CD4-positive, alpha-beta memory T cell (primary cell): ENCODE measurements at regions of chr7 and their contacts with region 1.

Region 1: GRCh38 chr7:5704534-5704922 is 76.9 kb downstream of the RNF216 start:
- DNase-seq: peak; percentile 74 to 79 (median 77)
- H3K4me3 ChIP-seq: no peak overlapping the region
- H3K4me3 Mint-ChIP-seq: no peak overlapping the region
- H3K27ac ChIP-seq: no peak overlapping the region
- H3K27ac Mint-ChIP-seq: peak overlapping the region in 3 of 7 donors; percentile 19 to 68 (median 32)
- H3K4me1 ChIP-seq: peaks cover 33% of the 10 kb centered on the region
- H3K4me1 Mint-ChIP-seq: peaks cover 27 to 37% (median 32%) of the 10 kb centered on the region in 4 donors
- H3K27me3 ChIP-seq: no peaks in the 10 kb centered on the region
- H3K27me3 Mint-ChIP-seq: no peaks in the 10 kb centered on the region

Region 2: DNA sequence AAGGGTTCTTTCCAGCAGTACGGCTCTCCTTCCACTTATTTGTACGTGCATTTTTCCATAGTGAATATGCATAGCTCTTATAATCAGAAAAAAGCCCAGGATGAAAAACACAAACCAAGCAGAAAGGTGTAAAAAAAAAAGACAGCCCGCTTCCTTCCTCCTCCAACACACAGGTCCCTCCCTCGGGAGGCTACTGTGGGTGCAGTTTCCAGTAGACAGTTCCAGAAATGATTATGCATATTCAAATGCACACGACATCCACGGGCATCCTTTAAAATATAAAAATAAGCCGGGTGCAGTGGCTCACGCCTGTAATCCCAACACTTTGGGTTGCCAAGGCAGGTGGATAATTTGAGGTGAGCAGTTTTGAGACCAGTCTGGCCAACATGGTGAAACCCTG is 340.8 kb before region 1 on chr7:
- CTCF ChIA-PET with region 1: interaction called, 8 read pairs
- POLR2A ChIA-PET with region 1: no interaction called
- intact Hi-C with region 1: loop called (anchors 5 kb)
- DNase-seq: no peak
- H3K4me3 ChIP-seq: no peak overlapping the region
- H3K4me3 Mint-ChIP-seq: peak overlapping the region in 4 of 8 donors; percentile 16 to 40 (median 30)
- H3K27ac ChIP-seq: no peak overlapping the region
- H3K27ac Mint-ChIP-seq: peak overlapping the region in 5 of 7 donors; percentile 9 to 44 (median 12)
- H3K4me1 ChIP-seq: peaks cover 7% of the 10 kb centered on the region
- H3K4me1 Mint-ChIP-seq: peaks cover 11 to 26% (median 20%) of the 10 kb centered on the region in 4 donors
- H3K27me3 ChIP-seq: no peaks in the 10 kb centered on the region
- H3K27me3 Mint-ChIP-seq: no peaks in the 10 kb centered on the region

Region 3: GRCh38 chr7:5526100-5526905 is 178.2 kb before region 1 on chr7:
- CTCF ChIA-PET with region 1: no interaction called
- POLR2A ChIA-PET with region 1: no interaction called
- intact Hi-C with region 1: loop called (anchors 1 kb)
- DNase-seq: peak in 3 of 5 donors; percentile 33 to 44 (median 43)
- H3K4me3 ChIP-seq: no peak overlapping the region
- H3K4me3 Mint-ChIP-seq: peak overlapping the region; percentile 91 to 99 (median 98)
- H3K27ac ChIP-seq: peak overlapping the region; percentile 69
- H3K27ac Mint-ChIP-seq: peak overlapping the region; percentile 93 to 99 (median 98)
- H3K4me1 ChIP-seq: peaks cover 23% of the 10 kb centered on the region
- H3K4me1 Mint-ChIP-seq: peaks cover 19 to 54% (median 35%) of the 10 kb centered on the region in 4 donors
- H3K27me3 ChIP-seq: no peaks in the 10 kb centered on the region
- H3K27me3 Mint-ChIP-seq: no peaks in the 10 kb centered on the region

Region 4: DNA sequence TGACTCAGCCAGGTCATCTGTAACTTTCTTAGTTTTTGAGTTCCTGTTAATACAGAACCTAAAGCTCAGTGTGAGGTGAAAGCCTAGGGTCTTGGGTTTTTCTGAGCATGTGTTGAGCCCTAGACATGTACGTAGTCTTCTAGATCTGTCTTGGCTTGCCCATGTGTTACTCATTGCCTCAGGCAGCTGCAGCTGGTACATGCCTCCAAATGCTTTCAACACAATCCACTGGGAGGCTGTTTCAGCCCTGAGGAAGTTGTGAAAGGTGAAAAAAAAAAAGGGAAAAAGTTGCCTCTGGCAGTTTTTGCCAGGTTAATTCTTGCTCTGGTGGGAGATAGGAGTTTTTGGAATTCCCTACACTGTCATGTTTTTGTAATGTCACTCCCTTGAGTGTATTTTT is 57.7 kb before region 1 on chr7:
- CTCF ChIA-PET with region 1: interaction called, 4 read pairs
- POLR2A ChIA-PET with region 1: no interaction called
- intact Hi-C with region 1: loop called (anchors 10 kb)
- DNase-seq: no peak
- H3K4me3 ChIP-seq: no peak overlapping the region
- H3K4me3 Mint-ChIP-seq: no peak overlapping the region
- H3K27ac ChIP-seq: no peak overlapping the region
- H3K27ac Mint-ChIP-seq: peak overlapping the region in 2 of 7 donors; percentile 9 to 42
- H3K4me1 ChIP-seq: peaks cover 31% of the 10 kb centered on the region
- H3K4me1 Mint-ChIP-seq: peaks cover 25 to 36% (median 31%) of the 10 kb centered on the region in 4 donors
- H3K27me3 ChIP-seq: no peaks in the 10 kb centered on the region
- H3K27me3 Mint-ChIP-seq: no peaks in the 10 kb centered on the region

Region 5: DNA sequence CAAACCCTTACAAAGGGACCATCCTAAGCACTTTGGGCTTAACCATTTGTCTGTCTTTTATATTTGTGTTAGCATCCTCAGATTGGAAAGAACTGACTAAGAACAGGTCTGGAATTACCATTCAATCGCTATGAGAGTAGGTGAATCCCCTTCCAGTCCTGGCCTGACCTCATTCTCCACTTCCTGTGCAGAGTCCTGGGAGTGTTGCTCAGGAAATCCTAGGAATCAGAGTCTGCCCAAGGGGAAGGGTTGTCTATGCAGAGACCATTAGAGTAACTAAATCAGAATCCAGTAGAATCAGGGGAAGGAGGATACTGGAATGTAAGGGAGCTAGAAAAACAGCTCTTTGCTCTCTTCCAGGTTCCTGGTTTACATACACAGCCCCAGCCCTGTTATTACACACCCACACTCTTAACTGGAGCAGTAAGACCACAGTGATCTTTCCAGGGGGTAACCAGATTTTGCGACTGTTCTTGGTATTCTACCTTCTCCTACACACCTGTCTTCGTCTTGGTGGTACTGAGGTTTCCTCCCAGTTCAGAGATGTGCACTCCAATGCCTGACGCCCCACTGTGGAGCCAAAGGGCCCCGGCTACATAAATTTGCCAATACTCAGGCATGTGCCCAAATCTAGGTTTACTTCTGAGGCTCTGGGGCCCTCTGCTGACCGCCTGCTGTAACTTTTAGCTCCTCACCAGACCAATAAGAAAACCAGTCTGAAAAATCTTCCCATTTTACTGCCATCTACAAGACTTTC is 26.8 kb before region 1 on chr7:
- CTCF ChIA-PET with region 1: interaction called, 23 read pairs
- POLR2A ChIA-PET with region 1: interaction called, 5 read pairs
- intact Hi-C with region 1: loop called (anchors 2 kb)
- DNase-seq: peak in 1 of 5 donors; percentile 43
- H3K4me3 ChIP-seq: no peak overlapping the region
- H3K4me3 Mint-ChIP-seq: peak overlapping the region in 1 of 8 donors; percentile 15
- H3K27ac ChIP-seq: no peak overlapping the region
- H3K27ac Mint-ChIP-seq: peak overlapping the region in 6 of 7 donors; percentile 25 to 77 (median 58)
- H3K4me1 ChIP-seq: peaks cover 42% of the 10 kb centered on the region
- H3K4me1 Mint-ChIP-seq: peaks cover 19 to 65% (median 45%) of the 10 kb centered on the region in 4 donors
- H3K27me3 ChIP-seq: no peaks in the 10 kb centered on the region
- H3K27me3 Mint-ChIP-seq: no peaks in the 10 kb centered on the region

Region 6: GRCh38 chr7:5822742-5823503 is 118.4 kb after region 1 on chr7:
- CTCF ChIA-PET with region 1: interaction called, 4 read pairs
- POLR2A ChIA-PET with region 1: no interaction called
- intact Hi-C with region 1: loop called (anchors 5 kb)
- DNase-seq: peak; percentile 98 to 100 (median 99)
- H3K4me3 ChIP-seq: peak overlapping the region; percentile 79 to 88
- H3K4me3 Mint-ChIP-seq: peak overlapping the region; percentile 84 to 95 (median 91)
- H3K27ac ChIP-seq: peak overlapping the region; percentile 79
- H3K27ac Mint-ChIP-seq: peak overlapping the region; percentile 81 to 98 (median 93)
- H3K4me1 ChIP-seq: peaks cover 33% of the 10 kb centered on the region
- H3K4me1 Mint-ChIP-seq: peaks cover 13 to 42% (median 27%) of the 10 kb centered on the region in 4 donors
- H3K27me3 ChIP-seq: no peaks in the 10 kb centered on the region
- H3K27me3 Mint-ChIP-seq: no peaks in the 10 kb centered on the region

Region 7: GRCh38 chr7:6032167-6032566 is 327.6 kb after region 1 on chr7:
- CTCF ChIA-PET with region 1: no interaction called
- POLR2A ChIA-PET with region 1: no interaction called
- intact Hi-C with region 1: no loop called
- DNase-seq: no peak
- H3K4me3 ChIP-seq: no peak overlapping the region
- H3K4me3 Mint-ChIP-seq: no peak overlapping the region
- H3K27ac ChIP-seq: no peak overlapping the region
- H3K27ac Mint-ChIP-seq: peak overlapping the region in 1 of 7 donors; percentile 43
- H3K4me1 ChIP-seq: peaks cover 9% of the 10 kb centered on the region
- H3K4me1 Mint-ChIP-seq: peaks cover 9 to 22% (median 13%) of the 10 kb centered on the region in 4 donors
- H3K27me3 ChIP-seq: no peaks in the 10 kb centered on the region
- H3K27me3 Mint-ChIP-seq: no peaks in the 10 kb centered on the region